K562 (cell line): ENCODE measurements at regions of chr11 and their contacts with region 1.

Region 1: DNA sequence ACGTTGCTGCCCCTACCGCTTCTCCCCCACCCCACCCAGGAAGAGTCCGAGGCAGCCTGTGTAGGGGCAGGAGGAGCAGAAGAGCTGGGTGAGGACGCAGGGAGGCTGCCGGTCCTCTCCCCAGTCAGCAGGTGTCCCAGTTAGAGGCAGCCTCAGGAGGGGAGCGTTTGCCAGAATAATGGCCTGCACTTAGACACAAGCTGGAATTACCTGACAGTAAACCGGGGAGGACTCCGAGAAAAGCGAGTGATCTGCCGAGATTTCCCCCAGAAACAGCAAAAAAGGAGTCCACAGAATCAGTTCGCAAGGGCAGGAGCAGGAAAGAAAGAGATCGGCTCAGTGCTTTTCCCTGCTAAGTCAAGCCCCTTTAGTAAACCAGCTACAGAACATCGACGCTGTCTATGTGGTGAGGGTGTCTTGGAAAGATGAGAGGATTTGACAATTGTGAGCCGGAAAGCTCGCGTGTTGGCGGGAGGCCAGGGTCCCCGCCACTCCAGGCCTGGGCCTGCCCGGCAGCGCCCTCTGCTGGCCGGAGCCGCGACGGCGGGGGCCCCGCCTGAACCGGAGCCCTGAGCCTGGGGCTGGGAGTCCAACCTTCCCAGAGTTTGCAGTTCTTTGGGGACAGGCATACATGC is 17.7 kb upstream of the THRSP start:
- DNase-seq: peak; percentile 85 to 94 (median 91)
- ATAC-seq: peak; percentile 86
- H3K4me3 ChIP-seq: no peak overlapping the region
- H3K27ac ChIP-seq: no peak overlapping the region
- H3K4me1 ChIP-seq: peaks cover 28 to 29% of the 10 kb centered on the region in 2 experiments
- H3K27me3 ChIP-seq: no peaks in the 10 kb centered on the region; a peak in 1 of 5 replicates
- CTCF ChIP-seq: peak; percentile 94 to 99 (median 94)
- EP300 ChIP-seq: no peak
- POLR2A ChIP-seq: no peak
- RAD21 ChIP-seq: peak; percentile 87 to 96

Region 2: GRCh38 chr11:77658213-77659013 is 387.6 kb before region 1 on chr11:
- CTCF ChIA-PET with region 1: no interaction called
- POLR2A ChIA-PET with region 1: no interaction called
- in situ Hi-C with region 1: no loop called
- intact Hi-C with region 1: loop called (anchors 10 kb)
- DNase-seq: peak; percentile 19 to 40 (median 25)
- ATAC-seq: peak; percentile 47
- H3K4me3 ChIP-seq: no peak overlapping the region
- H3K27ac ChIP-seq: no peak overlapping the region
- H3K4me1 ChIP-seq: peaks cover 3 to 8% of the 10 kb centered on the region in 2 experiments; a peak in 3 of 5 replicates
- H3K27me3 ChIP-seq: no peaks in the 10 kb centered on the region
- CTCF ChIP-seq: no peak
- EP300 ChIP-seq: no peak
- POLR2A ChIP-seq: no peak
- RAD21 ChIP-seq: no peak

Region 3: DNA sequence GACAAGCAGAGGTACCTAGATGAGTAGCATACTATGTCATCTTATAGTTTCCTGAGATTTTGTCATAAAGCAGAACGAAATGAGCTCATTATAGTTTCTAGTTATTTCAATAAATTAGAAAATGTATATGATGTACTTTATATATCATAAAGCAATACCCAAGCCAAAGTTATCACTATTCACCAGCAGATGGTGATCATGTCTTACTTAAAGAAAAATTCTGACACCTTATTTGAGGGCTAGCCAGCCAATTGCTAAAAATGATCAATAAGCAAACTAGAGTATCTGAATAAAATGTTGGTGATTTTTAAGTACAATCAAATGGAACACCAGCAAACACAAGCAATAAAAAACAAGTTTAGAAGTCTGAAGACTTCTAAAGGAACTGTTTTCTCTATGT is 269.5 kb before region 1 on chr11:
- CTCF ChIA-PET with region 1: no interaction called
- POLR2A ChIA-PET with region 1: no interaction called
- in situ Hi-C with region 1: no loop called
- intact Hi-C with region 1: loop called (anchors 2 kb)
- DNase-seq: peak in 2 of 4 experiments; percentile 21 to 27
- ATAC-seq: peak; percentile 56; the same call in 2 of the 3 replicates
- H3K4me3 ChIP-seq: no peak overlapping the region
- H3K27ac ChIP-seq: no peak overlapping the region
- H3K4me1 ChIP-seq: peaks cover 0 to 3% of the 10 kb centered on the region in 2 experiments; a peak in 1 of 5 replicates
- H3K27me3 ChIP-seq: no peaks in the 10 kb centered on the region
- CTCF ChIP-seq: peak in 2 of 3 experiments; percentile 27 to 50; a peak in 3 of 6 replicates
- EP300 ChIP-seq: no peak
- POLR2A ChIP-seq: no peak
- RAD21 ChIP-seq: peak; percentile 24 to 62

Region 4: GRCh38 chr11:77820563-77821348 is 225.2 kb before region 1 on chr11 and contains the starts of genes AAMDC and RSF1:
- CTCF ChIA-PET with region 1: no interaction called
- POLR2A ChIA-PET with region 1: no interaction called
- in situ Hi-C with region 1: no loop called
- intact Hi-C with region 1: loop called (anchors 5 kb)
- DNase-seq: peak; percentile 94 to 98 (median 95)
- ATAC-seq: peak; percentile 90
- H3K4me3 ChIP-seq: peak within 1 kb of the TSS; percentile 97
- H3K27ac ChIP-seq: peak within 1 kb of the TSS; percentile 92
- H3K4me1 ChIP-seq: peaks cover 12 to 22% of the 10 kb centered on the region in 2 experiments; a peak in 4 of 5 replicates
- H3K27me3 ChIP-seq: no peaks in the 10 kb centered on the region
- CTCF ChIP-seq: peak; percentile 70 to 85 (median 73)
- EP300 ChIP-seq: peak; percentile 24; the same call in 1 of the 2 replicates
- POLR2A ChIP-seq: peak; percentile 82
- RAD21 ChIP-seq: peak; percentile 45 to 46
- polyA plus RNA-seq, gene AAMDC: 37.5 to 40.6 TPM
- polyA plus RNA-seq, gene RSF1: 9.7 to 14.4 TPM

Region 5: DNA sequence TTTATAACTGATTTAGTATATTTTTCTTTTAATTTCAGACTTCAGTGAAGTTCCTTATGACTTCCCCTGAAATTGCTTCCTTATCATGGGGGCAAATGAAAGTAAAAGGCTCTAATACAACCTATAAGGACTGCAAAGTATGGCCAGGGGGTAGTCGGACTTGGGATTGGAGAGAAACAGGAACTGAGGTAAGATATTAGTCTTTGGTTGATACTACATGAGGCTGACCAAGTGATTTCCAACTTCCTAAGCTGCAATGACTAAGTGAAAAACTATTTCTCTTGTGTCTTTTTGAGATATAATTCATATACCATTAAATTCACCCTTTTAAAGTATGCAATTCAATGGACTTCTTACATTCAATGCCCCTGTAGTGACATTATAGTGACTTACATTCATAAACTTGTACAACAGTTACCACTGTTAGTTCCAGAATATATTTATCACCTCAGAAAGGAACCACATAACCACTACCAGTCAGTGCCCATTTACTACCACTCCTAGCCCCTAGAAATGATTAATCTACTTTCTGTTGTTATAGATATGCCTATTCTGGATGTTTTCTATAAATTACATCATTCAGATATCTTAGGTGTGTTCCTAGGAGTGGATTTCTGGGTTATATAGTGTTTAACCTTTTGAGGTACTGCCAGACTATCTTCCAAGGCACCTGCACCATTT is 203.4 kb before region 1 on chr11:
- CTCF ChIA-PET with region 1: no interaction called
- POLR2A ChIA-PET with region 1: no interaction called
- in situ Hi-C with region 1: no loop called
- intact Hi-C with region 1: no loop called
- DNase-seq: no peak
- ATAC-seq: no peak
- H3K4me3 ChIP-seq: no peak overlapping the region
- H3K27ac ChIP-seq: no peak overlapping the region
- H3K4me1 ChIP-seq: no peaks in the 10 kb centered on the region
- H3K27me3 ChIP-seq: no peaks in the 10 kb centered on the region
- CTCF ChIP-seq: no peak
- EP300 ChIP-seq: no peak
- POLR2A ChIP-seq: no peak
- RAD21 ChIP-seq: no peak

Region 6: GRCh38 chr11:77968337-77968736 is 77.6 kb before region 1 on chr11:
- CTCF ChIA-PET with region 1: no interaction called
- POLR2A ChIA-PET with region 1: no interaction called
- in situ Hi-C with region 1: no loop called
- intact Hi-C with region 1: no loop called
- DNase-seq: no peak
- ATAC-seq: no peak
- H3K4me3 ChIP-seq: no peak overlapping the region
- H3K27ac ChIP-seq: no peak overlapping the region
- H3K4me1 ChIP-seq: no peaks in the 10 kb centered on the region
- H3K27me3 ChIP-seq: no peaks in the 10 kb centered on the region
- CTCF ChIP-seq: no peak
- EP300 ChIP-seq: no peak
- POLR2A ChIP-seq: no peak
- RAD21 ChIP-seq: no peak

Region 7: DNA sequence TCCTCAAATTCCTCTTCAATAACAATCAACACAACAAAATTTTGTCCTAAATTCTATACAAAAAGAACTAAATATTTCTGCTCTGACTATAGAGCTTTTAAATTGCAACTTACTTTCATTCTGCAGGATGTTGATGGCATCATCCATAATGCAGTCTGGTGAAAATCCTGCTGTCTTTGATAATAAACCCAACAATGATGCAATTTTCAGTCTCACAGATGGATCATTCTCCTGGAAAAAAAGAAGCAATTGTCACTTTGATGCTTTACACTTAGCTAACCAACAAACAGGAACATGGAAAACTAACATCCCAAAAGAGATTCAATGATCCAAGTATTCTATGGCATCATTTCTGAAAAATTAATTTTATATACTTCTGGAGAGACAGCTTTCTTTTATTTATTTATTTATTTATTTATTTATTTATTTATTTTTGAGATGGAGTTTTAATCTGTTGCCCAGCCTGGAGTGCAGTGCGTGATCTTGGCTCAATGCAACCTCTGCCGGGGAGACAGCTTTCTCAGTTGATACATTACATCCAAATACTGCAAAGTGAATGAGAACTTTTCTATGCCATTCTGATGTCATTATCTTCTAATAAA is 64.5 kb before region 1 on chr11:
- CTCF ChIA-PET with region 1: no interaction called
- POLR2A ChIA-PET with region 1: no interaction called
- in situ Hi-C with region 1: no loop called
- intact Hi-C with region 1: no loop called
- DNase-seq: no peak
- ATAC-seq: no peak
- H3K4me3 ChIP-seq: no peak overlapping the region
- H3K27ac ChIP-seq: no peak overlapping the region
- H3K4me1 ChIP-seq: no peaks in the 10 kb centered on the region
- H3K27me3 ChIP-seq: no peaks in the 10 kb centered on the region
- CTCF ChIP-seq: no peak
- EP300 ChIP-seq: no peak
- POLR2A ChIP-seq: no peak
- RAD21 ChIP-seq: no peak

Region 8: GRCh38 chr11:78000193-78000592 is 45.8 kb before region 1 on chr11:
- CTCF ChIA-PET with region 1: interaction called, 3 read pairs
- POLR2A ChIA-PET with region 1: no interaction called
- in situ Hi-C with region 1: no loop called
- intact Hi-C with region 1: loop called (anchors 5 kb)
- DNase-seq: peak; percentile 62 to 81 (median 66)
- ATAC-seq: peak; percentile 92
- H3K4me3 ChIP-seq: no peak overlapping the region
- H3K27ac ChIP-seq: no peak overlapping the region
- H3K4me1 ChIP-seq: peaks cover 2 to 4% of the 10 kb centered on the region in 2 experiments; a peak in 3 of 5 replicates
- H3K27me3 ChIP-seq: no peaks in the 10 kb centered on the region
- CTCF ChIP-seq: peak; percentile 73 to 80 (median 76)
- EP300 ChIP-seq: no peak
- POLR2A ChIP-seq: no peak
- RAD21 ChIP-seq: peak; percentile 46 to 71